Vagina (tissue), 2 donors: ENCODE measurements at regions of chr6 and their contacts with region 1.

Region 1: GRCh38 chr6:35139908-35140655 is 1.1 kb downstream of the TCP11 start:
- DNase-seq: no peak
- H3K4me3 ChIP-seq: no peak overlapping the region
- H3K27ac ChIP-seq: no peak overlapping the region
- H3K4me1 ChIP-seq: peaks cover 11% of the 10 kb centered on the region
- H3K27me3 ChIP-seq: no peaks in the 10 kb centered on the region
- CTCF ChIP-seq: peak; percentile 86 to 95 (median 88)
- POLR2A ChIP-seq: no peak

Region 2: DNA sequence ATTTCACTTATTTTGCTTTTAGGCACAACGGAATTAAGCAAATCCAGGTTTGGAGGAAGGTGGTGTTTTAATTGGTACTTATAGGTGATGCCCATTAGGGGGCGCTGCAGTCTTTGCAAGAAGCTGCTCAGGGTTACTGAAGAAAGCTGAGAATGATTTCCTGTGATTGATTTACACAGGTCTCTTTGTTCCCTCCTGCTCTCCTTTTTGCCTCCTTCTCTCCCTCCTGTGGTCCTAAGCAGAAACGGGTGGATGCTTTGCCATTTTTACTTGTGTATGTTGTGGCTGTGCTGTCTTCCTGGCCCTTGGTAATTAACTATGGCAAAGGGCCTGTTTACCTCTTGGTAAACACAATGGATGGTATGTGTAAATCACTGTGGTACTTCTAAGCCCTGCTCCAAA is 153.2 kb before region 1 on chr6:
- intact Hi-C with region 1: loop called (anchors 5 kb)
- DNase-seq: no peak
- H3K4me3 ChIP-seq: no peak overlapping the region
- H3K27ac ChIP-seq: no peak overlapping the region
- H3K4me1 ChIP-seq: no peaks in the 10 kb centered on the region
- H3K27me3 ChIP-seq: no peaks in the 10 kb centered on the region
- CTCF ChIP-seq: peak; percentile 80 to 81 (median 81)
- POLR2A ChIP-seq: no peak

Region 3: DNA sequence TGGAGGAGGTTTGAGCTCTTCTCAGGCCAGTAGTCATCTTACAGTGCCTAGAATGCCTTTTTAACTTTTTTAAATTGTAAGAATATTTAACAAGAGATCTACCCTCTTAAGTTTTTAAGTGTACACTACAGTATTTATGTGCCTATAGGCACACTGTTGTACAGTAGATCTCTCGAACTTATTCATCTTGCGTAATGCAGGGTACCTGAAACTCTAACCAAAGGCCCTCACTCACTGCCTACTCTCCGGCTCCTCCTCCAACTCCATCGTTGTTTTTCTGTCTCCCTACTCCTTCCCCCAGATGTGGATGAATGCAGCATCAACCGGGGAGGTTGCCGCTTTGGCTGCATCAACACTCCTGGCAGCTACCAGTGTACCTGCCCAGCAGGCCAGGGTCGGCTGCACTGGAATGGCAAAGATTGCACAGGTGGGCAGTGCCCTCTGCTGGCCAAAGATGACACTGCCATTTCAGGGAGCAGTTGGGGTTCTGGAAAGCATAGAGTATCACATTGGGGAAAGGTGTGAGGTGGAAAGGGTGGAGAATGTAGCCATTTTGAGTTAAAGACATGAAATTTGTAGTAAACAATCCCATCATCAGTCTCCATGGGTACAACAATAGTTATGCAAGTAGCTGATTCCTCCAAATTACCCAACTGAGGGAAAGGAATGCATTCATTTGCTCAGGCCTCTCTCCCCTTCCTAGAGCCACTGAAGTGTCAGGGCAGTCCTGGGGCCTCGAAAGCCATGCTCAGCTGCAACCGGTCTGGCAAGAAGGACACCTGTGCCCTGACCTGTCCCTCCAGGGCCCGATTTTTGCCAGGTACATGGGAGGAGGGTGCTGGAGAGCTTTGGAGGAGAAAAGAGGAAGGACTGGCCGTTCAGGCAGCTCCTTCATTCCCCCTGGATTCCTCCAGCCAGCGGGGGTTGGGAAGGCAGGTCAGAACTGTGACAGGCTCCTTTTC is 101.0 kb after region 1 on chr6:
- intact Hi-C with region 1: loop called (anchors 10 kb)
- DNase-seq: no peak
- H3K4me3 ChIP-seq: no peak overlapping the region
- H3K27ac ChIP-seq: no peak overlapping the region
- H3K4me1 ChIP-seq: peaks cover 10% of the 10 kb centered on the region
- H3K27me3 ChIP-seq: no peaks in the 10 kb centered on the region
- CTCF ChIP-seq: peak; percentile 72 to 87 (median 82)
- POLR2A ChIP-seq: no peak